ENCODE measurements at regions of chr6 and their contacts with region 1.

Region 1: DNA sequence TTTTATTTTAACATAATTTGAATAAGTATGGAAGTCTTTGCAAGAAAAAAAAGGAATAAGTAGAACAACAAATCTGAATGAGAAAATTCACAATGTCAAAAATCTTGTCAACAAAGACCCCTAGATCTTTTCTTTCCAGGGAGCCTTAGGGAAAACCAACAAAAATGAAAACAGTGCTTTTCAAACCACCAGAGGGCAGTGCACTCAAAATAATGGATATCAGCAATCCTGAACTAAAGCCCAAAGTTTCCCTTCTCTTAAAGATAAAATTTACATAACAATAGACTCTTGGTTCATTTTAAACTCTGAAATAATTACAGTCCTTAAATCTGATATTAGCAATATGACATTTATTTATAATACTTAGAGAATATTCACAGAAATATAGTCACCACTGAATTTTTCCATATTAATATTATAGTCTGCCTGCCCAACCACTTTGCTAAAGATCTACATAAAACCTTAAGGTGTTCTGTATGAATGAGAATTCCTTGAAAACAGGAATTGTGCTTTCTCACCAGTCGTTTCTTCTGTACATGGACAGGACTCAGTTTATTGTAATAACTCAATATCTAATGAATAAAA is 105.3 kb upstream of the BMP5 start:
- DNase-seq: no peak
- H3K4me3 ChIP-seq: no peak overlapping the region
- H3K27ac ChIP-seq: no peak overlapping the region
- H3K4me1 ChIP-seq: no peaks in the 10 kb centered on the region
- H3K27me3 ChIP-seq: no peaks in the 10 kb centered on the region
- CTCF ChIP-seq: peak in 10 of 11 experiments; percentile 24 to 64 (median 52)
- POLR2A ChIP-seq: no peak

Region 2: DNA sequence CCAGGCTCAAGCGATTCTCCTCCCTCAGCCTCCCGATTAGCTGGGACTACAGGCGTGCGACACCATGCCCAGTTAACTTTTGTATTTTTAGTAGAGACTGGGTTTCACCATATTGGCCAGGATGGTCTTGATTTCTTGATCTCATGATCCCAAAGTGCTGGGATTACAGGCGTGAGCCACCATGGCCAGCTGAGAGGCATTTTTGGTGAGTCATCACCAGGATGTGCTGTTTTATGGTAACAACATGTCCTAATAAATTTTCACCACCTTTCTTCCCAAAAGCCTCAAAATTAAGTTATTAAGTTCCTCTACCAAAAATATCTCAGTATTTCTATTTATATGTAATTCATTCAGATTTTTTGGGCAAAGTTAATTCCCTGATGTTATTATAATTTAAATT is 213.1 kb after region 1 on chr6:
- intact Hi-C with region 1: no loop called
- DNase-seq: no peak
- H3K4me3 ChIP-seq: no peak overlapping the region
- H3K27ac ChIP-seq: no peak overlapping the region
- H3K4me1 ChIP-seq: no peaks in the 10 kb centered on the region
- H3K27me3 ChIP-seq: no peaks in the 10 kb centered on the region
- CTCF ChIP-seq: no peak
- POLR2A ChIP-seq: no peak

Region 3: DNA sequence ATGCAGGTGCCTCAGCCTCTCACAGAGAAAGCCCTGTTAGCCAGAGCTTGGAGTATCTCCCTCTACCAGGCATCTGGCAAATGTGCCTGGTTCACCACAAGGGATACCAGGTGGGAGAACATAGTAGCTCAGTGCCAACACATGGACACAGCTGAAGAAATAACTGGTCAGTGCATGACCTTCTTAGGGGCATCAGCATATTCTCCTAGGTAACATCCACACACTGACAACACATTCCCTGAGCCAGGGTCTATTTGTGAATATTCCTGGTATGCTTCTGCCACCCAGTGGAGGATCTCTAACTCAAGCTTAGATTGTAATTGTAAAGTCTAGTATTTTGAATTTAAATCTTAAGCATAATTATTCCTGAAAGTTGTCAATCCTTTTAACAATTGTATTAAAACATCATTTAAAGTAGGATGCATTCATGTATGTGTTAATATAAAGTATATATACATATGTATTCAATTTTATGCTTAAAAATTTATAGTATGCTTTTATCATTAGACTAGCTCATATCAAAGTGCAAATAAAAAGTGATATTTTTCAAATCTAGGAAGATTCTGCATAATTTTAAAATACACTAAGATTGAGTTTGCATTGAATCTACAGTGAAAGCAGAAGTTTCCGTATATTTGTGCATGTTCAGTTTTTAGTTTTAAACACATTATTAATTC is 311.9 kb after region 1 on chr6:
- intact Hi-C with region 1: loop called (anchors 5 kb)
- DNase-seq: no peak
- H3K4me3 ChIP-seq: no peak overlapping the region
- H3K27ac ChIP-seq: no peak overlapping the region
- H3K4me1 ChIP-seq: no peaks in the 10 kb centered on the region
- H3K27me3 ChIP-seq: no peaks in the 10 kb centered on the region
- CTCF ChIP-seq: peak in 8 of 11 experiments; percentile 5 to 52 (median 37)
- POLR2A ChIP-seq: no peak

Region 4: GRCh38 chr6:56517155-56517745 is 536.5 kb after region 1 on chr6:
- intact Hi-C with region 1: no loop called
- DNase-seq: no peak
- H3K4me3 ChIP-seq: no peak overlapping the region
- H3K27ac ChIP-seq: no peak overlapping the region
- H3K4me1 ChIP-seq: peaks cover 0 to 4% (median 0%) of the 10 kb centered on the region in 6 donors
- H3K27me3 ChIP-seq: no peaks in the 10 kb centered on the region
- CTCF ChIP-seq: no peak
- POLR2A ChIP-seq: no peak